ENCODE measurements at regions of chr5 and their contacts with region 1.

Region 1: GRCh38 chr5:110757118-110757729 is 18.4 kb downstream of the SLC25A46 start:
- DNase-seq: peak; percentile 62
- H3K4me3 ChIP-seq: no peak overlapping the region
- H3K27ac ChIP-seq: no peak overlapping the region
- H3K4me1 ChIP-seq: no peaks in the 10 kb centered on the region
- H3K27me3 ChIP-seq: no peaks in the 10 kb centered on the region
- CTCF ChIP-seq: peak; percentile 47 to 48
- POLR2A ChIP-seq: no peak

Region 2: GRCh38 chr5:110865400-110866094 is 108.3 kb after region 1 on chr5:
- CTCF ChIA-PET with region 1: no interaction called
- POLR2A ChIA-PET with region 1: no interaction called
- dilution Hi-C with region 1: no loop called
- intact Hi-C with region 1: loop called (anchors 1 kb)
- DNase-seq: peak; percentile 7
- H3K4me3 ChIP-seq: no peak overlapping the region
- H3K27ac ChIP-seq: no peak overlapping the region
- H3K4me1 ChIP-seq: no peaks in the 10 kb centered on the region
- H3K27me3 ChIP-seq: no peaks in the 10 kb centered on the region
- CTCF ChIP-seq: no peak
- POLR2A ChIP-seq: no peak

Region 3: GRCh38 chr5:111092062-111092853 is 335.0 kb after region 1 on chr5 and contains the start of gene WDR36:
- CTCF ChIA-PET with region 1: no interaction called
- POLR2A ChIA-PET with region 1: no interaction called
- dilution Hi-C with region 1: no loop called
- intact Hi-C with region 1: loop called (anchors 2 kb)
- DNase-seq: peak; percentile 91
- H3K4me3 ChIP-seq: peak within 1 kb of the TSS; percentile 25 to 95 (median 95)
- H3K27ac ChIP-seq: peak within 1 kb of the TSS; percentile 46
- H3K4me1 ChIP-seq: peaks cover 18% of the 10 kb centered on the region
- H3K27me3 ChIP-seq: no peaks in the 10 kb centered on the region
- CTCF ChIP-seq: no peak
- POLR2A ChIP-seq: peak; percentile 58
- total RNA-seq, gene WDR36: 30.2 and 33.8 TPM in 2 replicates

Region 4: GRCh38 chr5:111278845-111279504 is 521.8 kb after region 1 on chr5:
- CTCF ChIA-PET with region 1: interaction called, 16 read pairs
- POLR2A ChIA-PET with region 1: no interaction called
- dilution Hi-C with region 1: no loop called
- intact Hi-C with region 1: loop called (anchors 1 kb)
- DNase-seq: peak; percentile 60
- H3K4me3 ChIP-seq: no peak overlapping the region
- H3K27ac ChIP-seq: no peak overlapping the region
- H3K4me1 ChIP-seq: no peaks in the 10 kb centered on the region
- H3K27me3 ChIP-seq: no peaks in the 10 kb centered on the region
- CTCF ChIP-seq: peak; percentile 82 to 87
- POLR2A ChIP-seq: no peak

Region 5: DNA sequence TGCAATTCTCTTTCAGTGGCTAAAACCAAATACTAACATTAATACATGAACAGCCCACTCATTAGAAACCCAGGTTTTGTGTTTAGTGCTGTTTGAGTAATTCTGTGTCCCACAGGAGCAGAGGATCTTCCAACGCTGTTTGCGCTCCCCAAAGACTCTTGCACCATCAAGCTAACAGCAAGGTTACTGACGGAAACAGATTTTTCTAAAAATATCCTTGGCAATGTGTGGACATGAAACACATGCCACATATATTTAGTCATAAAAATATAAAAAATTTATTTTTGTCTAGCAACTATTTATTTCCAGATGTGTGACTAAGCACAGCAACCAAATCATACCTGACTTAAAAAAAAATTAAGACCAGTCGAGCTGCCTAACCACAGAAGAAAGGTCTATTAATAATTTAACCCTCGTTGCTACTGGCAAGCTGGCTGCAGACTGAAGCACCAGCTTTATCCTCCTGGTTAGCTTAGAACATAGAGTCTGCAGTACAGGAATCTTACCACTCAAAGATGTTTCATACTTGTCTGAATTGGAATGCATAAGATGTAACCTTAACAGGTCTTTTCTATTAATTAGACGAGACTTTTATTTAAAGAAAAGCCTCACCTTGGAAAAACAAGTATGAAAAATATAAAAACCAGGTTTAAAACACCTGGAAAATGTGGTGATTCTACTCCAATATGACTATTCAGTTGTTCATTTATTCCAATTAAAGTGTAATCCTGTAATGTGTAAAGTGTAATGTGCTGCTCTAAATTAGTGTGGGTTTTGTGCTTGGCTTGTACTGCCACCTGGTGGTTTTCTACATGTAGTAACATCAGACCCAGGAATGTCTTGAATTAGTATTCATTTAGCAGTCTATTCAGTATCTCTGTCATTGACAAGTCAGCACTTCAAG is 1389.4 kb after region 1 on chr5:
- CTCF ChIA-PET with region 1: no interaction called
- POLR2A ChIA-PET with region 1: no interaction called
- dilution Hi-C with region 1: no loop called
- intact Hi-C with region 1: loop called (anchors 1 kb)
- DNase-seq: peak; percentile 81
- H3K4me3 ChIP-seq: no peak overlapping the region
- H3K27ac ChIP-seq: no peak overlapping the region
- H3K4me1 ChIP-seq: peaks cover 13% of the 10 kb centered on the region
- H3K27me3 ChIP-seq: no peaks in the 10 kb centered on the region
- CTCF ChIP-seq: peak; percentile 45 to 49
- POLR2A ChIP-seq: no peak

Measured in endothelial cell of umbilical vein (primary cell).